Common myeloid progenitor, CD34-positive (primary cell): ENCODE measurements at regions of chr1 and their contacts with region 1.

Region 1: GRCh38 chr1:156383023-156383422 is 14.0 kb downstream of the RHBG start:
- DNase-seq: peak; percentile 62 to 76 (median 69)
- H3K4me3 ChIP-seq: no peak overlapping the region
- H3K27ac ChIP-seq: no peak overlapping the region
- H3K4me1 ChIP-seq: peaks cover 3 to 21% (median 17%) of the 10 kb centered on the region in 4 experiments
- H3K27me3 ChIP-seq: peaks cover 0 to 20% (median 10%) of the 10 kb centered on the region in 5 experiments

Region 2: DNA sequence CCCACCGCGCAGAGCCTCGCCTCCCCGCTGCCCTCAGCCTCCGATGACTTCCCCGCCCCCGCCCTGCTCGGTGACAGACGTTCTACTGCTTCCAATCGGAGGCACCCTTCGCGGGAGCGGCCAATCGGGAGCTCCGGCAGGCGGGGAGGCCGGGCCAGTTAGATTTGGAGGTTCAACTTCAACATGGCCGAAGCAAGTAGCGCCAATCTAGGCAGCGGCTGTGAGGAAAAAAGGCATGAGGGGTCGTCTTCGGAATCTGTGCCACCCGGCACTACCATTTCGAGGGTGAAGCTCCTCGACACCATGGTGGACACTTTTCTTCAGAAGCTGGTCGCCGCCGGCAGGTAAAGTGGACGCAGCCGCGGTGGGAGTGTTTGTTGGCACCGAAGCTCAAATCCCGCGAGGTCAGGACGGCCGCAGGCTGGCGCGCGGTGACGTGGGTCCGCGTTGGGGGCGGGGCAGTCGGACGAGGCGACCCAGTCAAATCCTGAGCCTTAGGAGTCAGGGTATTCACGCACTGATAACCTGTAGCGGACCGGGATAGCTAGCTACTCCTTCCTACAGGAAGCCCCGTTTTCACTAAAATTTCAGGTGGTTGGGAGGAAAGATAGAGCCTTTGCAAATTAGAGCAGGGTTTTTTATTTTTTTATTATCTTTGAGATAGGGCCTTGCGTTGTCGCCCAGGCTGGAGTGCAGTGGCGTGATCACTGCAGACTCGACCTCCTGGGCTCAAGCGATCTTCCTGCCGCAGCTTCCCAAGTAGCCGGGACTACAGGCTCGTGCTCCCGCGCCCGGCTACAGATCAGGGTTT is 170.0 kb before region 1 on chr1 and contains the start of gene PMF1:
- CTCF ChIA-PET with region 1: no interaction called
- POLR2A ChIA-PET with region 1: no interaction called
- DNase-seq: peak; percentile 95 to 97 (median 96)
- H3K4me3 ChIP-seq: peak within 1 kb of the TSS; percentile 64 to 98 (median 92)
- H3K27ac ChIP-seq: peak within 1 kb of the TSS; percentile 98
- H3K4me1 ChIP-seq: peaks cover 8 to 39% (median 28%) of the 10 kb centered on the region in 4 experiments
- H3K27me3 ChIP-seq: no peaks in the 10 kb centered on the region

Region 3: GRCh38 chr1:156368889-156369684 is 13.9 kb before region 1 on chr1 and contains the start of gene RHBG:
- CTCF ChIA-PET with region 1: interaction called, 48 read pairs
- POLR2A ChIA-PET with region 1: no interaction called
- DNase-seq: peak in 2 of 3 donors; percentile 47 to 53
- H3K4me3 ChIP-seq: peak within 1 kb of the TSS; percentile 22 to 72 (median 49)
- H3K27ac ChIP-seq: no peak within 1 kb of the TSS
- H3K4me1 ChIP-seq: peaks cover 0 to 15% (median 12%) of the 10 kb centered on the region in 4 experiments
- H3K27me3 ChIP-seq: peaks cover 2 to 30% (median 13%) of the 10 kb centered on the region in 5 experiments

Region 4: DNA sequence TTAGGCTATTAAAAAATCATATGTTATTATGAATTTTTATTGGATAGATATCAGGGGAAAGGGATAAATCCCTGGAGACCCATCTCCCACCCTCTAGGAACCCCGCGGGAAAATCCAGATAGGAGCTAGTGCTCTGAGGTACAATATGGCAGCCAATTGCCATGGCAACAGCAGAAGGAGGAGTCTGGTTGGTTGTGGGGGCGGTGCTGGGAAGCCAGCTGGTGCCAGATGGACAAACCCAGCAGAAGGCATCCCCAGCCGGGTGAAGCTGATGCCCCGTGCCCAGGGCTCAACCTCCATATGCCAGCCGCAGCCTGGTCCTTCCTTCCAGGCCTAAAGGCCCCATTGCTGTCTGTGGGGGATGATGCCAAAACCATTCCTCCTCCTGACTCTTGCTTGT is 24.3 kb after region 1 on chr1:
- CTCF ChIA-PET with region 1: interaction called, 70 read pairs
- POLR2A ChIA-PET with region 1: no interaction called
- DNase-seq: no peak
- H3K4me3 ChIP-seq: no peak overlapping the region
- H3K27ac ChIP-seq: no peak overlapping the region
- H3K4me1 ChIP-seq: no peaks in the 10 kb centered on the region
- H3K27me3 ChIP-seq: peaks cover 2 to 75% (median 41%) of the 10 kb centered on the region in 5 experiments

Region 5: GRCh38 chr1:156435545-156436141 is 52.6 kb after region 1 on chr1:
- CTCF ChIA-PET with region 1: interaction called, 98 read pairs
- POLR2A ChIA-PET with region 1: no interaction called
- DNase-seq: peak in 2 of 3 donors; percentile 41 to 50
- H3K4me3 ChIP-seq: peak overlapping the region in 4 of 7 experiments; percentile 25 to 50 (median 40)
- H3K27ac ChIP-seq: no peak overlapping the region
- H3K4me1 ChIP-seq: peaks cover 0 to 23% (median 14%) of the 10 kb centered on the region in 4 experiments
- H3K27me3 ChIP-seq: peaks cover 36 to 100% (median 71%) of the 10 kb centered on the region in 5 experiments